ENCODE measurements at regions of chr10 and their contacts with region 1.

Region 1: DNA sequence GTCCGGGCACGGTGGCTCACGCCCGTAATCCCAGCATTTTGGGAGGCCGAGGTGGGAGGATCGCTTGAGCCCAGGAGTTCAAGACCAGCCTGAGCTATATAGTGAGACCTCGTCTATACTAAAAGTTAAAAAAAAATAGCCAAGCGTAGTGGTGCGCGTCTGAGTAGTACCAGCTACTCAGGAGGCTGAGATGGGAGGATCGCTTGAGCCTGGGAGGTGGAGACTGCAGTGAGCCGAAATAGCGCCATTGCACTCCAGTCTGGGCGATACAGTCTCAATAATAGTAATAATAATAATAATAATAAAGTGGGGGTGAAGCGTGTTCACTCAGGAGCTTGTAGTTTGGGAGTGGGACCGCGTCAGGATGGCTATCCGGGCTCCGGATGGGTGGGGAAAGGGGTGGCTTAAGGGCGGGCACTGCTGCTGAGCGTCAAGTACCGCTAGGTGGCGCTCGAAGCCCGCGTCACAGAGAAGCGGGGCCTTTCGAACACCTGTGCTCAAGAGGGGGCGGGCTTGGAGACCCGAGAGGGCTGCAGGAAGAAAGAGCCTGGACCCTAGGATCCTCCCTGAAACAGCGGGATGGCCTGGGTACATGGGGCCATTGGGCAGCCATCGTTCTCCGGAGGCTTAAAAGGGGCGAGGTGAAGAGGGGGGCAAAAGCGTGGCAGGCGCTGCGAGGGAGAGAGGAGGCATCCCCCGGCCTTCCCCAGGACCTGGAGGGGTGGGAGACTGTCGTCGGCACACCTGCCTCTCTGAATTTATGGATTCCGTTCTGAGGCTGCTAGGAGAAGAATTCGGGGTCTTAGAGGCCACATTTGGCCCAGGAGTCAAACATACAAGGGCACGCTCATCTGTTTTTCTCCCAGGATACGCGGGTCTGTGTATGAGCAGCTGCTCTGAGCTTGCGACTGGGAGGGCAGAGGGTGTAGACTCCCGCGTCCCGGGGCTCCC is 14.5 kb downstream of the LBX1 start:
- DNase-seq: peak; percentile 50 to 84 (median 74)
- ATAC-seq: peak; percentile 78
- H3K4me3 ChIP-seq: no peak overlapping the region
- H3K4me3 Mint-ChIP-seq: peak overlapping the region; percentile 68
- H3K27ac ChIP-seq: no peak overlapping the region
- H3K27ac Mint-ChIP-seq: no peak overlapping the region
- H3K4me1 ChIP-seq: peaks cover 40% of the 10 kb centered on the region
- H3K4me1 Mint-ChIP-seq: peaks cover 29% of the 10 kb centered on the region
- H3K27me3 ChIP-seq: peaks cover 46 to 59% of the 10 kb centered on the region in 2 experiments
- H3K27me3 Mint-ChIP-seq: peaks cover 64% of the 10 kb centered on the region
- CTCF ChIP-seq: peak; percentile 77

Region 2: DNA sequence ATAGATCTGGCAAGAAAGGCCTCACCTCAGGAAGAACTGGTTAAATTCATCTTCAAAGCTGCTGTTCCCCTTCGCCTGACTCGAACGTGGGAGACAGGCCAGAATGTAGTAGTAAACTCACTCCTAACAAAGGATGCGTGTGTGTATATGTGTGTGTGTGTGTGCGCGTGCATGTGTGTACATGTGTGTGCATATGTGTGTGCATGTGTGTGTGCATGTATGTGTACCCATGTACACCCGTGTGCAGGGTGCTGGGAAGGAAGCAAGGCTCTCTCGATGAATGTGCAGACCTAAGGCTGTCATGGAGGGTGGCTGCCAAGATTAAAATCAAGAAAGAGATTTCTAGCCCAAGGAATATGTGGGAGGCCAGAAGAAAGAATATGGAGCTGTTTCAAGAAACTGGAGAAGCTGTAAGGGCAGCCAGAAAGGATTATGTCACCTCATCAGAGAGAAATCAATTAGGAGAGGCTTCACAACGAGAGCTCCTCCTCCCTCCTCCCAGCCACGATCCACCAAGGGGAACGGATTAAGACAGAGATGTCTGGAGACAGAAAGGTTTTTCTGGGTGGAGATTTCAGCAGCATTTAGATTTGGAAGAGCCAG is 48.5 kb after region 1 on chr10:
- CTCF ChIA-PET with region 1: interaction called, 14 read pairs
- POLR2A ChIA-PET with region 1: no interaction called
- intact Hi-C with region 1: no loop called
- DNase-seq: no peak
- ATAC-seq: no peak
- H3K4me3 ChIP-seq: no peak overlapping the region
- H3K4me3 Mint-ChIP-seq: no peak overlapping the region
- H3K27ac ChIP-seq: no peak overlapping the region
- H3K27ac Mint-ChIP-seq: no peak overlapping the region
- H3K4me1 ChIP-seq: no peaks in the 10 kb centered on the region
- H3K4me1 Mint-ChIP-seq: no peaks in the 10 kb centered on the region
- H3K27me3 ChIP-seq: peaks cover 3 to 4% of the 10 kb centered on the region in 2 experiments
- H3K27me3 Mint-ChIP-seq: peaks cover 36% of the 10 kb centered on the region
- CTCF ChIP-seq: no peak

Region 3: DNA sequence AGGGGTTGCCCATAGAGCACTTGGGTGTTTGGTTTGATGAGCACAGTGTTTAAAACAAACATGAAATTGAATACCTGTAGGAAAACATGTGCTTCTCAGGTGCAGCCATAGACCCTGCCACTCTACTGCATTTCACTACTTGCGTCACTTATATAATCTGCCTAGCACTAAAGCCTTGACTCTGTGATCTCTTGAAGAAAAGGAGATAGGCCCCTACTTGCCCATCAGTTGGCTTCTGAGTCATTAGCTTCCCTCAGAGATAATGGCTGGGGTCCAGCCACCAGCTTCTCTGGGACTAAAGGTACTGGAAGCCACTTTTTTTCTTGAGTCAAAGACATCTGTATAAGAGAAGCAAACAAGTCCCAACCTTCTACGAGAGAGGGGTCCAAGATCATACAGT is 93.3 kb after region 1 on chr10:
- CTCF ChIA-PET with region 1: interaction called, 13 read pairs
- POLR2A ChIA-PET with region 1: no interaction called
- intact Hi-C with region 1: no loop called
- DNase-seq: no peak
- ATAC-seq: no peak
- H3K4me3 ChIP-seq: no peak overlapping the region
- H3K4me3 Mint-ChIP-seq: no peak overlapping the region
- H3K27ac ChIP-seq: no peak overlapping the region
- H3K27ac Mint-ChIP-seq: no peak overlapping the region
- H3K4me1 ChIP-seq: peaks cover 9% of the 10 kb centered on the region
- H3K4me1 Mint-ChIP-seq: peaks cover 8% of the 10 kb centered on the region
- H3K27me3 ChIP-seq: peaks cover 0 to 9% of the 10 kb centered on the region in 2 experiments
- H3K27me3 Mint-ChIP-seq: peaks cover 65% of the 10 kb centered on the region
- CTCF ChIP-seq: no peak

Region 4: DNA sequence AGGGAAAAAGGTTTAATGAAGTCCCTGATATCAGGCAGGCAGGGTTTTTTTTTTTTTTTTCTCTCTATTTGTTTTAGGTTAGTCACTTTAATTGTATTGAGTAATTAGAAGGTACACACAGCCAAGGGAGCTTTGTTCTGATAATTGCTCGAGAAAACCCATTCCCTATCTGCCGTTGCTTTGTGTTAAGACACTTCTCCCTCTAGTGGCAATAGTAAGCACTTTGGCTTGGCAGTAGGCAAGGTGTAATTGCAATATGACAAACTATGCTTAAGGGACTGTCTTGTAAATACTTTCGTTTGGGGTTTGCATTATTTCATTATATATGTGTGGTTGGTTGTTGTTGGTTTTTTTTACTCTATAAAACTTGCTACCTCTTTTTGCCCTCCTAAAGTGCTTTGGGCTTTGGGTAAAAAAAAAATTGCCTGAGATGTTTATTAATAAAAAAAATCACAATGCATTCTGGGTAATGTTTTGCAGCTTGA is 252.6 kb after region 1 on chr10:
- CTCF ChIA-PET with region 1: interaction called, 49 read pairs
- POLR2A ChIA-PET with region 1: no interaction called
- intact Hi-C with region 1: loop called (anchors 1 kb)
- DNase-seq: peak in 5 of 9 experiments; percentile 7 to 73 (median 23)
- ATAC-seq: peak; percentile 75
- H3K4me3 ChIP-seq: no peak overlapping the region
- H3K4me3 Mint-ChIP-seq: no peak overlapping the region
- H3K27ac ChIP-seq: no peak overlapping the region
- H3K27ac Mint-ChIP-seq: no peak overlapping the region
- H3K4me1 ChIP-seq: peaks cover 4% of the 10 kb centered on the region
- H3K4me1 Mint-ChIP-seq: peaks cover 8% of the 10 kb centered on the region
- H3K27me3 ChIP-seq: no peaks in the 10 kb centered on the region
- H3K27me3 Mint-ChIP-seq: no peaks in the 10 kb centered on the region
- CTCF ChIP-seq: peak; percentile 86

Region 5: DNA sequence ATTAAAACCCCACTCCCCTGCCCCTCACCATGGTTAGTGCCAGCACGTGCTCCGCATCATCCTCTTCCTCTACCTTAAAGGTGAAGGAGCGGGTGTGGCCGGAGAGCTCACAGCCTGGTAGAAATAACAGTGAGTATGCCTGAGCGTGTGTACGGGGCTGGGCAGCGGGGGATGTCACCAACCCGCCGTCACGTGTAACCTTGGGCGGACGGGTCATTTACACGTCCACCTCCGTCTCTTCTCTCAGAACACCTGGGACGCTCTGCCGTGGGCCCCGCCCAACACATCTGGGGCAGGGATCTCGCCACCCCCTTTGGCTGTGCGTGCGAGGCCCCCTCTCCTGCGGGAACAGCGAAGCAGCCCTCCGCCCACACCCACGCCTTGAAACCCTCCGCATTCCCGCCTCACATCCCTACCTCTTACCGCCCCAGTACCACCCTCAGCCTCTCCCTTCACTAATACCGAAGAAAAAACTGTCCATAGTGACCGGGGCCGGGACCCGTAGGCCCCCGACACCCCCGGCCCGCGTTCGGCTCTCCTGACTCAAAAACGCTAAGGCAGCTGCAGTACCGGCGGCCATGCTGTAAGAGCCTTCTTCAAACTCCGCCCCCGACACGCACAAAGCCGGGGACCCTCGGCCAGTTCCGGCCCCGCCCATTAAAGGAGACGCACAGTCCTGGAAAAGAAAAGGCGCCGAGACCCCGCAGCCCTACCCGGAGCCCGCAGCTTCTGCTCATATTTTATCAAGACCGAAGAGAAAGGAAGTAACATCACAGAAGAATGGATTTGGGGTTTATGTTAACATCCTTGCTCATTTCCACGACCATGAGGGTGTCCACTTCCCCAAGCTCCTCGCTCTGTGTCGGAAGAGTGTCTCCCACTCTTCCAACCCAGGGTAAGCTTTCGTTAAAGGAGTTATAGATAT is 568.4 kb after region 1 on chr10 and contains the start of gene NPM3:
- CTCF ChIA-PET with region 1: interaction called, 9 read pairs
- POLR2A ChIA-PET with region 1: interaction called, 3 read pairs
- intact Hi-C with region 1: loop called (anchors 1 to 2 kb)
- DNase-seq: peak; percentile 54 to 88 (median 83)
- ATAC-seq: peak; percentile 80
- H3K4me3 ChIP-seq: peak within 1 kb of the TSS; percentile 81 to 87
- H3K4me3 Mint-ChIP-seq: peak within 1 kb of the TSS; percentile 100
- H3K27ac ChIP-seq: peak within 1 kb of the TSS; percentile 64 to 81
- H3K27ac Mint-ChIP-seq: peak within 1 kb of the TSS; percentile 97
- H3K4me1 ChIP-seq: peaks cover 53% of the 10 kb centered on the region
- H3K4me1 Mint-ChIP-seq: peaks cover 71% of the 10 kb centered on the region
- H3K27me3 ChIP-seq: peaks cover 13 to 20% of the 10 kb centered on the region in 2 experiments
- H3K27me3 Mint-ChIP-seq: peaks cover 6% of the 10 kb centered on the region
- CTCF ChIP-seq: no peak
- total RNA-seq, gene NPM3: 21.1 to 25.1 TPM

Region 6: DNA sequence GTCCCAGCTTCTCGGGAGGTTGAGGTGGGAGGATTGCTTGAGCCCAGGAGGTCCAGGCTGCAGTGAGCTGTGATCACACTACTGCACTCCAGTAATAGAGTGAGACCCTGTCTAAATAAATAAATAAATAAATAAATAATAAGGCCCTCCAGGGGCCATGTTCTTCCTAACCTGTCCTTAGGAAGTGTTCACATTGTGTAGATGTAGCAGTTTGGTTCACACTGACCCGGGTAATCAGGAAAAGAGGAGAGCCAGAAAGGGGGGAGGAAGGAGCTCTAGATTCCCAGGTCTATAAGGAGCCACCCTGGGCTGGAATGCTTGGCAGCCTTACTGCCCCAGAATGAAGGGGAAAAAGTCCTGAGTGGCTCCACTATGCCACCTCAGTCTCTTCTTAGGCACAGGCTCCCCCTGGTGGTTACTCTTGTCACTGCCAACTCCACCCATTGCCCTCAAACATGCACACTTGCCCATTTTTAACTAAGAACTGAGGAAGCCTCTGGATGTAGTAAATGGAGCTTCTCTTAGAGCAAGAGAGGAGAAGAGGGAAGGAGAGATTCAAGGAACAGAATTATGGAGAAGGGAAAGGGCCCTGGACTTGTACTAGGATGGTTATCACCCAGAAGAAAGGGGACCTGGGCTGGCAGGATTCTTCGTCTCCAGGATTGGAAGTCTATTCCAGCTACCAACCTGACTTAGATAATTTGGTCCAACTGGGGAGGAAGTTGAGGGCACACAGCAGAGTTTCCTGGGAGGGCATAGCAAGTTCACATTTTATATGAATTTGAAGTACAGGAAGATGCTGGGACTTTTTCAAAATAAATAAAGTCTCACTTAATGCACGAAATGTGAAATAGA is 858.2 kb after region 1 on chr10:
- CTCF ChIA-PET with region 1: no interaction called
- POLR2A ChIA-PET with region 1: no interaction called
- intact Hi-C with region 1: loop called in 1 of 2 experiments (anchors 5 kb)
- DNase-seq: peak; percentile 63 to 86 (median 82)
- ATAC-seq: peak; percentile 97
- H3K4me3 ChIP-seq: no peak overlapping the region
- H3K4me3 Mint-ChIP-seq: no peak overlapping the region
- H3K27ac ChIP-seq: no peak overlapping the region
- H3K27ac Mint-ChIP-seq: no peak overlapping the region
- H3K4me1 ChIP-seq: no peaks in the 10 kb centered on the region
- H3K4me1 Mint-ChIP-seq: peaks cover 5% of the 10 kb centered on the region
- H3K27me3 ChIP-seq: no peaks in the 10 kb centered on the region
- H3K27me3 Mint-ChIP-seq: no peaks in the 10 kb centered on the region
- CTCF ChIP-seq: peak; percentile 82

Measured in CD8-positive, alpha-beta T cell (primary cell).